ENCODE measurements at regions of chr9 and their contacts with region 1.

Region 1: DNA sequence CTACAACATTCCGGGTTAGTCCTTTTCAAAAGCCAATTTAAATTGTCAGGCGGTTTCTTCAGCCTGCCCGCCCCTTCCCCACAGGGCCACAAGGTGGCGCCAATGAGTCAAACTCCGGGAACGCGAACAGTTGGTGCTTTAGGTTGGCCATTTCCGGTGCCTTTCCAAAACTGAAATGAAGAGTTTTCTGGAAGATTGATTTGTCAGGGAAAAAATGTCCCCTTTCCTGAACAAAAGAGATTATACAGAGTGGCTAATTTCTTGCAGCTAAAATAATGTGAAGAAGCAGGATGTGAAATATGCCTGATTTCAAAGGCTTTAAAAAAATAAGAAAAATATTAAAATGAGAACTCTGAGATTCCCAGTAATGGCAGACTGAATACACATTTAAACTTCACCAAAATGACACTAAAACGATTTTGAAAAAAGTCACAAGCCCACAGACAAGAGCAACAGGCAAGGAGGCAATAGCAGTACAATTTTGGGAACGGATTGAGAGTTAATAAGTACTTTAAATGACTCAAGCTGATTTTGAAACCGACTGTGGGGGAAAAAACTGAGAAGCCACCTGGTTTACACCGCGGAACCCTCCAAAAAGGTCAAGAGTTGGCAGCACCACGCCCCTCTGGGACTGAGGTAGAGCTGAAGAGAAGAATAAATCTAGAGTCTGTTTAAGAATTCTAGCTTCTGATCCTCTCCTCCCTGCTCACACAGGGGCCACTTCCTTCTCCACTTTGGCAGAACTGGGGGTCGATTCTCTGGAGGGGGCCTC is 45.7 kb downstream of the SLC46A2 start:
- DNase-seq: peak; percentile 46 to 54 (median 49)
- H3K4me3 ChIP-seq: no peak overlapping the region
- H3K27ac ChIP-seq: no peak overlapping the region
- H3K4me1 ChIP-seq: peaks cover 0 to 20% (median 11%) of the 10 kb centered on the region in 4 experiments
- H3K27me3 ChIP-seq: peaks cover 0 to 2% (median 0%) of the 10 kb centered on the region in 5 experiments

Region 2: DNA sequence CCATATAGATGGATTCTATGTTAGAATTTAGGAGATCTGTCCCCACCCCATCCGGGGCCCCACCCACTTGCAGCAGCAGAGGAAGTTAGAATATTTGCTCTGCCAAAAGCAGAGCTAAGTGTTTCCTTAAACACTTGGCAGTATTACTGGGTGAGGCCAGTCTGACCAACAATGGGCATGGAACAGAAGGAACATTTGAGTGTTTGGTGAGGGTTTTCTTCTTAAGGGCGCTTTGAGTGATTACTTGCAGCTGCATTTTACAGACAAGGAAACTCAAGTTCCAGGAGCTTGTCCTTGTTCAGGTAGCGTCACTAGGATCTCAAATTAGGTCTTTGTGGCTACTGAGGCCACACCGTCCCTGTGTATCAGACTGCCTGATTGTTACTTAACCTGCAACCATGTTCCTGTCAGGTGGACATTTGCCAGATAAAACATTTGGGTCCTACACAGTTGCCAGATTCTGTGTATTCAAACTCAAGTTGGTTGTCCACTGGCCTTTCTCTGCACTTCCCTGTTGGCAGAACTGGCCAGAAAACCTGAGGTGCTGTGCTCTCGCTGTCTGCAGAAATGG is 13.6 kb before region 1 on chr9:
- CTCF ChIA-PET with region 1: interaction called, 11 read pairs
- POLR2A ChIA-PET with region 1: no interaction called
- DNase-seq: peak in 2 of 3 donors; percentile 47 to 57
- H3K4me3 ChIP-seq: peak overlapping the region in 1 of 7 experiments; percentile 3
- H3K27ac ChIP-seq: no peak overlapping the region
- H3K4me1 ChIP-seq: peaks cover 1 to 12% (median 11%) of the 10 kb centered on the region in 4 experiments
- H3K27me3 ChIP-seq: peaks cover 0 to 1% (median 0%) of the 10 kb centered on the region in 5 experiments

Region 3: GRCh38 chr9:112887381-112887780 is 42.4 kb after region 1 on chr9:
- CTCF ChIA-PET with region 1: interaction called, 11 read pairs
- POLR2A ChIA-PET with region 1: no interaction called
- DNase-seq: peak; percentile 28 to 58 (median 36)
- H3K4me3 ChIP-seq: no peak overlapping the region
- H3K27ac ChIP-seq: no peak overlapping the region
- H3K4me1 ChIP-seq: peaks cover 0 to 15% (median 11%) of the 10 kb centered on the region in 4 experiments
- H3K27me3 ChIP-seq: peaks cover 0 to 43% (median 14%) of the 10 kb centered on the region in 5 experiments

Region 4: DNA sequence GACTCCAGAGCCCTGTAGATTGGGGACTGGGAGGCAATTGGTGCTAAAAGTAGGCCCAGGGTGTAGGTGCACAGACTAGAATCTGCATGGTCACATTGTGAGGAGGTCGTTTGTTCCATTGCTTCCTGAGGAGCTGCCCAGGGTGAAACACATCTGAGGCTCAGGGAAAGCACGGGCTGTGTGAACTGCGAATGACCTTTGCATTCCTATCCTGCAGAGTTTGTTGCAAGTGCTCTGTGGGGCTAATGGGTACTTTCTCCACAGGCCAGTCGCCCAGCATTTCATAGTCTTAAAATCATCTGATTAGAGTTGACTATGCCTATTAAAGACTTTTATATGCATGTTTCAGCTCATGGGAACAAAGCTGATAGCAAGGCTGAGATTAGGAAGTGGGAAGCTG is 60.1 kb after region 1 on chr9:
- CTCF ChIA-PET with region 1: interaction called, 111 read pairs
- POLR2A ChIA-PET with region 1: no interaction called
- DNase-seq: no peak
- H3K4me3 ChIP-seq: no peak overlapping the region
- H3K27ac ChIP-seq: no peak overlapping the region
- H3K4me1 ChIP-seq: no peaks in the 10 kb centered on the region
- H3K27me3 ChIP-seq: peaks cover 0 to 11% (median 0%) of the 10 kb centered on the region in 5 experiments